ENCODE measurements at regions of chr16 and their contacts with region 1.

Region 1: DNA sequence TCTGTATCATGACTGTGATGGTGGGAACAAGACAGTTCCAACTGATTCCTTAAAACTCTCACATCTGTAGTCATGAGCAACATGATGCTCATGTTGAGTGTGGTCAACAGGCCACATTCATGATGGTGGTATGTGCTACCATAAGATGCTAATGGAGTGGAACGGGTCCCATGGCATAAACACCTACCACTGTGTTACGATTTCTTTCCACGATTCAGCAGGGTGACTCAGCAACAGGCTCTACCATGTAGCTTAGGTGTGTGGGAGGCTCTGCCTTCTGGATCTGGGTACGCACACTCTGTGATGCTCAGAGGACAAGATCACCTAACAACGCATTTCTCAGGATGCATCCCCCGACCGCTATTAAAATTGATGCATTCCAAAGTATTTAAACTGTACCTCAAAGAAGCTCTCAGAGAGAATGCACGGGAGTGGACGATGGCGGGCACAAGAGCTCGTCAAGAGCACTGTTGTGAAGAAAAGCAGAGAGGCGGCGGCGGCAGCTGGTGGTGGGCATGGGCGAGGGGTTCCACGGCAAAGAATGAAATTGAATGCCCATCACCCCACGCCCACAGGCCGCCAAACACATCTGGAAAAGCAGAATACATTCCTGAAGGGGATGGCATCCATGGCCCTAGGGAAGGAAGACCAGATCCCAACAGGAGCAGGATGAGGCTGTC is 133.3 kb downstream of the ZNF778 start:
- DNase-seq: peak in 1 of 9 donors; percentile 45
- ATAC-seq: no peak
- H3K4me3 ChIP-seq: no peak overlapping the region
- H3K4me3 Mint-ChIP-seq: peak overlapping the region in 7 of 10 donors; percentile 0 to 67 (median 31)
- H3K27ac ChIP-seq: no peak overlapping the region
- H3K27ac Mint-ChIP-seq: peak overlapping the region in 7 of 9 donors; percentile 3 to 80 (median 57)
- H3K4me1 ChIP-seq: peaks cover 34 to 72% of the 10 kb centered on the region in 2 donors
- H3K4me1 Mint-ChIP-seq: peaks cover 70 to 99% (median 90%) of the 10 kb centered on the region in 7 donors
- H3K27me3 ChIP-seq: no peaks in the 10 kb centered on the region
- H3K27me3 Mint-ChIP-seq: no peaks in the 10 kb centered on the region

Region 2: GRCh38 chr16:88686439-88687253 is 664.2 kb before region 1 on chr16 and contains the start of gene SNAI3:
- CTCF ChIA-PET with region 1: no interaction called
- POLR2A ChIA-PET with region 1: no interaction called
- intact Hi-C with region 1: no loop called
- DNase-seq: peak; percentile 69 to 96 (median 80)
- ATAC-seq: peak; percentile 91
- H3K4me3 ChIP-seq: peak within 1 kb of the TSS; percentile 85
- H3K4me3 Mint-ChIP-seq: peak within 1 kb of the TSS; percentile 72 to 87 (median 81)
- H3K27ac ChIP-seq: peak within 1 kb of the TSS; percentile 77
- H3K27ac Mint-ChIP-seq: peak within 1 kb of the TSS in 8 of 9 donors; percentile 6 to 81 (median 63)
- H3K4me1 ChIP-seq: peaks cover 21 to 48% of the 10 kb centered on the region in 2 donors
- H3K4me1 Mint-ChIP-seq: peaks cover 23 to 76% (median 59%) of the 10 kb centered on the region in 7 donors
- H3K27me3 ChIP-seq: no peaks in the 10 kb centered on the region
- H3K27me3 Mint-ChIP-seq: no peaks in the 10 kb centered on the region
- total RNA-seq, gene SNAI3: 2.7 to 13.0 (median 6.1) TPM

Region 3: DNA sequence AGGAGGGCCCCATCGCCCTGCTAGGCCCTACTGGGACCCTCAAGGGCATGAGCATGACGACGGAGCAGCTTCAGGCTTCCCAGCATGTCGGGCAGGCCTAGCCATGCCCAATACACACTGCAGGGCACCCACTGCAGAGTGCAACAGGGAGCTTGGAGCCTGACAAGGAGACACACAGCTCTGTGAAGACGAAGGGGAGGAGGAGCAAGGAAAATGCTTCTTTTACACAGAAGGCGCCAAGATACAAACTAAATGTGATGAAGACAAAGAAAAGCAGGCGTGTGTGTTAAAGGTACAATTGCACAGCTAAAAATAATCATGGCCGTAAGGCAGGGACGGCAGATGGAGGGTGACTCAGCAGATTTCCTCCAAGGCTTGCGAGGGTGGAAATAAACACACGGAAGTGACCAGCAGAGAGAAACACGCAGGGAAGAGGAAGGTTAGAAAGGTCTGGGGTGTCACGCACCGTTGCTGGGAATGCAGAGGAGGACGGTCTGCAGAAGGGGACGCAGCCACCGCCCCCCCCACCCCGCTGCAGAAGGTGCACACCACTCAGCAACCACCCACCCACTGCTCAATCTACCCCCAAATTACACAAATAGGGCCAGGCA is 24.9 kb before region 1 on chr16:
- CTCF ChIA-PET with region 1: no interaction called
- POLR2A ChIA-PET with region 1: no interaction called
- intact Hi-C with region 1: no loop called
- DNase-seq: no peak
- ATAC-seq: peak; percentile 60
- H3K4me3 ChIP-seq: no peak overlapping the region
- H3K4me3 Mint-ChIP-seq: peak overlapping the region; percentile 34 to 71 (median 47)
- H3K27ac ChIP-seq: peak overlapping the region; percentile 9
- H3K27ac Mint-ChIP-seq: peak overlapping the region; percentile 41 to 88 (median 81)
- H3K4me1 ChIP-seq: peaks cover 54 to 80% of the 10 kb centered on the region in 2 donors
- H3K4me1 Mint-ChIP-seq: peaks cover 53 to 93% (median 82%) of the 10 kb centered on the region in 7 donors
- H3K27me3 ChIP-seq: no peaks in the 10 kb centered on the region
- H3K27me3 Mint-ChIP-seq: no peaks in the 10 kb centered on the region

Region 4: GRCh38 chr16:89363621-89364393 is 13.0 kb after region 1 on chr16:
- CTCF ChIA-PET with region 1: no interaction called
- POLR2A ChIA-PET with region 1: interaction called, 7 read pairs
- intact Hi-C with region 1: loop called (anchors 1 kb)
- DNase-seq: peak in 2 of 9 donors; percentile 12 to 59
- ATAC-seq: no peak
- H3K4me3 ChIP-seq: no peak overlapping the region
- H3K4me3 Mint-ChIP-seq: peak overlapping the region; percentile 10 to 73 (median 62)
- H3K27ac ChIP-seq: peak overlapping the region; percentile 23
- H3K27ac Mint-ChIP-seq: peak overlapping the region; percentile 13 to 90 (median 77)
- H3K4me1 ChIP-seq: peaks cover 56 to 75% of the 10 kb centered on the region in 2 donors
- H3K4me1 Mint-ChIP-seq: peaks cover 65 to 99% (median 87%) of the 10 kb centered on the region in 7 donors
- H3K27me3 ChIP-seq: no peaks in the 10 kb centered on the region
- H3K27me3 Mint-ChIP-seq: no peaks in the 10 kb centered on the region